Activated CD8-positive, alpha-beta T cell treated with anti-CD3 and anti-CD28 coated beads, Interleukin-2, amount 10 ng/mL, durations not matched to agents 7 days and 5 days (primary cell): ENCODE measurements at regions of chr2 and their contacts with region 1.

Region 1: DNA sequence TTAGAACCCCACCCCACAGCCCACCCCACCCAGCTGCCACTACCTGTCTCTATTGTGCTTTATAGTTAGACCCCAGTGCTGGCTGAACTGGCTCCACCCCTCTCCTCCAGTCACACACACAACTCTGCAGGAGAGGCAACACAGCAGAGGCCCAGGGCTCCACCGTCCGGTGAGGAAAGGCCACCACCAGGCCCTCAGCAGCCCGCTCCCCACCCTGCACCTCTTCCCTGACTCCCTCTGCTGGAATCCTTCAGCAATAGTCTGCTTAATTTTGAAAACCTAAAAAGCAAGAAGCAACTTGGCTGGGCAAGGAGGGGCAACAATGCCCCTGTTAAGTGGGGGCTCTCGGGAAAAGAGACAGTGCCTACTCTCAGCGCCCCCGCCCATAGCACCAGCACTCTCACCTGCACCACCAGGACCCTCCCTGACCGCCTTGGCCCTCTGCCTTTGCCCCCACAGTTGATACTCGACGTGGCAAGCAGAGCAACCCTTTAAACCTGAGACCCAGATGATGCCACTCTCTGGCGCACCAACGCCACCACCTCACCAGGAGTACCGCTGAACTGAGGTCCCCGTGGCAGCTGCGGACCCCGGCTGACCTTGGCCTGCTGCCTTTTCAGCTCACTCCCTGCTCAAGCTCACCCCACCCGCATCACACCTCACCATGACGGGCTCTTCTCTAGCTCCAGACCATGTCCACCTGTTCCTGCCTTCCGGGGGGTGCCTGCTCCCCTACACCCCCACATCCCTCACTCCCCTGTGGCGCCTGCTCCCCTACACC is 45.7 kb downstream of the NDUFA10 start:
- DNase-seq: no peak
- ATAC-seq: no peak
- H3K4me3 Mint-ChIP-seq: no peak overlapping the region
- H3K27ac Mint-ChIP-seq: no peak overlapping the region
- H3K4me1 Mint-ChIP-seq: no peaks in the 10 kb centered on the region
- H3K27me3 Mint-ChIP-seq: no peaks in the 10 kb centered on the region

Region 2: DNA sequence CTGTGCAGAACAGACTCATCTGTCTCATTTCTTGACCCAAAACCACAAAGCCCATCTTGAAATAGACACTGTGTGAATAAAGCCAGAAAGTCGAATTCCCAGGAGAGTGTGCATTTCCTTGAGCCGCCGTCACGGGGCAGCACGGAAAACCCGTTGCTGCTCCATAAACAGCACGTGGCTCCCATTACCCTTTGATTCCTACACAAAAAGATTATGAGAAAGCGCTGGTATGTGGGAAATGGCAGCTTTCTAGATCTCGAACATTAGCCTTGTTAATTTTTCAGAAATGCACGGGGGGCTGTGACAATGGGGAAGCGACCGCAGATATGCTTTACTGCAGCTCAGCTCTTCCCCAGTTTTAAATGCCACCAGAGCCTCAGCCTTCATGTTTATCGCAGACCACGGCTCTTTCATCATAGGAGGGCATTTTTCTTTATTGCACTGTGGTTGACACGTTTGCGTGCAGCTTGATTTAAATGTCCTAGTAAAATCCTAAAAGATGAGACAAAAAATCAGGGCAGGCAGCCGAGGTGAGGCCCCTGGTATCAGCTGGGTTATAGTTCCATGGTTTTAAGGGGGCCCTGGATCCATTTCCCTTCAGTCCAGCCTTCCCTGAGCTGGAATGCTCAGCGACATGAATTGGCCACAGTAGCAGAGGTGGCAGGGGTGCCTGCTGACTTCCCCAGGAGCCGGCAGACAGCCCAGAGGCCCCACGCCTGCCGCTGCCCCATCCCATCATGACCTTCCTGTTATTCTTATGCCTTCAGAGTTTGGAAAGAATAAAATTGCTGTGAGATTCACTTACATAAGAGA is 203.6 kb before region 1 on chr2:
- CTCF ChIA-PET with region 1: no interaction called
- POLR2A ChIA-PET with region 1: no interaction called
- DNase-seq: no peak
- ATAC-seq: no peak
- H3K4me3 Mint-ChIP-seq: no peak overlapping the region
- H3K27ac Mint-ChIP-seq: no peak overlapping the region
- H3K4me1 Mint-ChIP-seq: no peaks in the 10 kb centered on the region
- H3K27me3 Mint-ChIP-seq: no peaks in the 10 kb centered on the region

Region 3: GRCh38 chr2:239953418-239954061 is 25.9 kb before region 1 on chr2:
- CTCF ChIA-PET with region 1: no interaction called
- POLR2A ChIA-PET with region 1: no interaction called
- DNase-seq: no peak
- ATAC-seq: no peak
- H3K4me3 Mint-ChIP-seq: no peak overlapping the region
- H3K27ac Mint-ChIP-seq: no peak overlapping the region
- H3K4me1 Mint-ChIP-seq: no peaks in the 10 kb centered on the region
- H3K27me3 Mint-ChIP-seq: no peaks in the 10 kb centered on the region

Region 4: DNA sequence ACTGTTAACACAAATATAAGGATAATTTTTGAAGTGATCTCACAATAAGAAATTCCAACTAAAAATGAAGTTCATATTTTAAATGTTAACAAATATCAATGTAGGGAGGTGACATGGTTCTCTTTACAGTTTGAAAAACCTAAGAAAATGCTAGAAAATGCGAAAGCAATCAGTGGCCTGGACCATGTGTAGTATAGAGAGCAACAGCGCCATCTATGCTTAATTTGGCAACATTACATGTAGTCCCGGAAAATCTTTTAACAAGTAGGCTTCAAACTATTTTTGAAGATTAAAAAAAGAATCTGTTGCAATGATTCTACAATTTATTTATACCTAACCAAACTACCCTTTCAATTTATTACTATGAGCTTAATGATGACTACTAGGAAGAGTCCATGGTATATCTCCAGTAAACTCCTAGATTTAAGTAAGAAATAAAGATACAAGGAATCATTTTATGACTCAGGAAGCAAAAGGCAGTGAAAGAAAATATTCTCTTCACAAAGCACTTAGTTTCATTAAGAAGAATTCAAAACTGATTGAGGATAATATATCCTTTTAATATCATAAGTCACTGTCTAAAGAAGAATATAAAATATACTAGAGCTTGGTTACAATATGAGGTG is 12.4 kb after region 1 on chr2:
- CTCF ChIA-PET with region 1: interaction called, 14 read pairs
- POLR2A ChIA-PET with region 1: no interaction called
- DNase-seq: peak; percentile 40
- ATAC-seq: peak; percentile 64
- H3K4me3 Mint-ChIP-seq: no peak overlapping the region
- H3K27ac Mint-ChIP-seq: no peak overlapping the region
- H3K4me1 Mint-ChIP-seq: no peaks in the 10 kb centered on the region
- H3K27me3 Mint-ChIP-seq: no peaks in the 10 kb centered on the region